Activated T-helper 1 cell treated with anti-CD3 and anti-CD28 coated beads, Interleukin-12 subunit alpha, Interleukin-12 subunit beta, Interleukin-2, Interleukin-4 antibody, amounts not matched to agents 30 ng/mL and 10 ng/mL and 1 ng/mL, durations not matched to agents 14 hours and 24 hours and 36 hours (primary cell): ENCODE measurements at regions of chr5 and their contacts with region 1.

Region 1: DNA sequence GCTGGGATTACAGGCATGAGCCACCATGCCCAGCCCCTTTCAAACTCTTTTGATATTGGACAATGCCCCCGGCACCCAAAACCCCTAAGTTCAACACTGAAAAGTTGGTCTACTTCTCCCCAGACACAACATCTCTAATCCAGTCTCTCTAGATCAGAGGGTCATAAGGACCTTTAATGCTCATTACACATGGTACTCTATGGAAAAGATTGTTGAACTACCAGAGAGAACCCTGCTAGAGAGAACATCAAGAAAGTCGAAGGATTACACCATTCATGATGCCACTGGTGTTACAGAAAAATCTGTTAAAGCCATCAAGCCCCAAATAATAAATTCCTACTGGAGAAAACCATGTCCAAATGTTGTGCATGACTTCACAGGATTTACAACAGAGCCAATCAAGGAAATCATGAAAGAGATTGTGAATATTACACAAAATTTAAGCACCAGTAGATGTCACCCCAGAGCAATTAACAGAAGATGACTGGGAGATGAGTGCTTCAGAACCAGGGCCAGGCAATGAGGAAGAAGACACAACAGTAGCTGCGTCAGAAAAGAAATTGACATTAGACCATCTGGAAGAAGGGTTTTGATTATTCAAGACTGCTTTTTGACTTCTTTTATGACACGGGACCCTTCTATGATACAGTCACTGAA is 28.3 kb upstream of the NIPAL4 start:
- DNase-seq: peak; percentile 7
- H3K4me3 Mint-ChIP-seq: no peak overlapping the region
- H3K27ac Mint-ChIP-seq: no peak overlapping the region
- H3K4me1 Mint-ChIP-seq: peaks cover 8% of the 10 kb centered on the region
- H3K27me3 Mint-ChIP-seq: peaks cover 22% of the 10 kb centered on the region

Region 2: DNA sequence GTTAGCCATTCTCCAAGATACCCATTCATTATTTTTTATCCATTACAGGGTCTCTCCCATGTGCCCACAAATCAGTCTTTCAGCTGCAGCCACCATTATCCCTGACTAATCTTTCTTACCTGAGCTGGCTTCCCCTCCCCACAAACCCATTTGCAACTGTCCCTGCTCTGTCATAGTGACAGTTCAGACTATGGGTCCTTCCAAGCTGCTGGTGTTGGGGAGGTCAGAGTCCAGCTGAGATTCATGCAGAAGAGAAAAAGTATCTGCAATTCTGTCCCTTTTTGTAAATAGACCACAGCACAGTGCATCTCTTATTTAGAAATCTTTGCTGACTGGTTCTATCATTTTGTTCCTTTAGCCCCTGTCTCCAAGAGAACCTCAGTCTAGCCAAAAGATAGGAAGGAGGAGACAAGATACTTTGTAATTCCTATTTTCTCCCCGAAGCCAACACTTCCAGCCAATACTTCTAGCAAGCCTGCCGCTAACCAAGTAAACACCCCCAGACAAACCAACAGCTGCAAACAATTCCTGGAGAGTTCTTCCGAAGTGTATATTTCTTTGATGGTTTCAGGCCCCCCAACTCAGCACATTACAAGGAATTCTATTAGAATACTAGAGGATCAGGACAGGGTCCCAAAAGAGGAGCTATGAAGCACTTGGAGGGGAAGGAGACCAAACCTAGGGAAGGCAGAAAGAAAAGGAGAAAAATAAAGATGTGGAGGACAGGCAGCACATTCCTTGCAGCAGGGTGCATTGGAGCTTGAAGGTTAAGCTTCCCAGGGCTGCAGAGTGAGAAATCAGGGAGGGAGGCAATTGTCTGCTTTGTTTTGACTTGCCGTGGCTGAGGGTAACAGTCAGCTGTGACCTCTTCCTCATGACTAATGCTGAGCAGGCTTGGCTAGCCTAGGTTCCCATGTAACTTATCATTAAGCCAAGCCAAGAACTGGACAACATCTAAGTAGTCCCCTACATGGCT is 956.2 kb before region 1 on chr5:
- intact Hi-C with region 1: no loop called
- DNase-seq: no peak
- H3K4me3 Mint-ChIP-seq: no peak overlapping the region
- H3K27ac Mint-ChIP-seq: no peak overlapping the region
- H3K4me1 Mint-ChIP-seq: no peaks in the 10 kb centered on the region
- H3K27me3 Mint-ChIP-seq: peaks cover 14% of the 10 kb centered on the region

Region 3: GRCh38 chr5:157471709-157472108 is 40.0 kb after region 1 on chr5:
- intact Hi-C with region 1: loop called (anchors 1 kb)
- DNase-seq: no peak
- H3K4me3 Mint-ChIP-seq: no peak overlapping the region
- H3K27ac Mint-ChIP-seq: peak overlapping the region; percentile 52
- H3K4me1 Mint-ChIP-seq: peaks cover 22% of the 10 kb centered on the region
- H3K27me3 Mint-ChIP-seq: no peaks in the 10 kb centered on the region

Region 4: GRCh38 chr5:157476702-157477408 is 45.2 kb after region 1 on chr5:
- intact Hi-C with region 1: loop called (anchors 1 kb)
- DNase-seq: no peak
- H3K4me3 Mint-ChIP-seq: no peak overlapping the region
- H3K27ac Mint-ChIP-seq: peak overlapping the region; percentile 48
- H3K4me1 Mint-ChIP-seq: peaks cover 65% of the 10 kb centered on the region
- H3K27me3 Mint-ChIP-seq: no peaks in the 10 kb centered on the region